Activated CD4-positive, alpha-beta T cell treated with anti-CD3 and anti-CD28 coated beads, Interleukin-2, amount 10 ng/mL, durations not matched to agents 24 days and 14 days (primary cell): ENCODE measurements at regions of chr12 and their contacts with region 1.

Region 1: DNA sequence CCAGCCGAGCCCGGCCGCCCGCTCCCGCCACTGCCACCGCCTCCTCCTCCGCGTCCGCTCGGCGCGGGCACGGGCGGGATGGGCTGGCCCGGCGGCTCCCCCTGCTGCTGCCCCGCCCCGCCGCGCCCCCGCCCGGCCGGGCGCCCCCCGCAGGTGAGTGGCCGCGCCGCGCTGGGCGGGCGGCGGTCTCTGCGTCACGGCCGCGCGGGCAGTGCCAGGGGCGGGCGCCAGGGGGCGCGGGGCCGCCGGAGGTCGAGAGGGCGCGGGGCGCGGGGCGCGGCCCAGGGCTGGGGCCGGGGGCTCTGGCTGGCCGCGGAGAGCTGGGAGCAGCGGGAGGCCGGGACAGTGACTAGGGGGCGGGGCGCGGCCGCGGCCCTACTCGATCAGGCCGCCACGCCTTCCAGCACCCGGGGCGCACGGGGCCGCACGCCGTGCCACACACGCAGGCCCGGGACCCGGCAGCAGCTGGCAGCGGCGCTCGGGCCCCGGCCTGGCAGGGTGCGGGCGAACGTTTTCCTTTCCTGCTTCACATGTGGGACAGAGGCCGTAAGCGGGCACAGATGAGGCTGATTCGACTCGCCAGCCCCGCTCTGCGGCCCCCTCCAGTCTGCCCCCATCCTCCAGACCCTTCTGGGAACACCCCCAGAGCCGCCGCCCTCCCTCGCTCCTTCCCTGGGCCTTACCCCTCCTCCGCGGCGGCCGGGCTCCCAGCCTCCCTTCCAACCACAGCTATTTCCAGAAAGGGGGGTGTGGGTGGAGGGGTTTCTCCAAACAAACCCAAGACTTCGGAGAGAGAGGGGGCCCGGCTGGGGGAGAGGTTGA is 2.4 kb upstream of the TNS2 start:
- DNase-seq: peak; percentile 93
- H3K4me3 Mint-ChIP-seq: peak overlapping the region; percentile 90
- H3K27ac Mint-ChIP-seq: peak overlapping the region; percentile 52
- H3K4me1 Mint-ChIP-seq: peaks cover 29% of the 10 kb centered on the region
- H3K27me3 Mint-ChIP-seq: no peaks in the 10 kb centered on the region

Region 2: DNA sequence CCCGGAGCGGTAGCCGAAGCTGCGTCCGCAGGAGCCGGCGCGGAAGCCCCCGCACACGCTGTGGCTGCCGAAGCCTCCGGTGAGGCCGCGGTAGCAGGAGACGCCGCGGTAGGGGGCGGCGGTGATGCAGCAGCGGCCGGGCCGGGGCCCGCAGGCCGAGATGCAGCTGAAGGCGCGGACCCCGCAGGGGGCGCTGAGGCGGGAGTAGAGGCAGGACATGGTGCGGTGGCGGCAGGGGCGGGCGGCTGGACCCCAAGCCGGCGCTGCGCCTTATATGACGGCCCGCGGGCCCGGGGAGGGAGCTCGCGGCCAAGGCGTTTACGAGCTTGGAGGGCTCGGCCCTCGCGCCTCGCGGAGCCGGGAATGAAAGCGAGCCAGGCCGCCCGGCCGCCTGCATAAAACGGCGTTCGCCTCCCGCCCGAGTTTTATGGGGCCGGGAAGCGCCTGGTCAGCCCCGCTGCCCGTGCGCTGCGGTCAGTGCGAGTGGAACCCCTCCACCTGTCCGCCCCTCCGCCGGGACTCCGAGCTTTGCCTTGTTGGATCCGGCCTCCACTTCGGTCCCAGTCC is 789.0 kb before region 1 on chr12:
- intact Hi-C with region 1: no loop called
- DNase-seq: no peak
- H3K4me3 Mint-ChIP-seq: no peak overlapping the region
- H3K27ac Mint-ChIP-seq: no peak overlapping the region
- H3K4me1 Mint-ChIP-seq: peaks cover 20% of the 10 kb centered on the region
- H3K27me3 Mint-ChIP-seq: peaks cover 54% of the 10 kb centered on the region

Region 3: GRCh38 chr12:52920937-52921826 is 126.2 kb before region 1 on chr12:
- intact Hi-C with region 1: no loop called
- DNase-seq: no peak
- H3K4me3 Mint-ChIP-seq: no peak overlapping the region
- H3K27ac Mint-ChIP-seq: no peak overlapping the region
- H3K4me1 Mint-ChIP-seq: peaks cover 6% of the 10 kb centered on the region
- H3K27me3 Mint-ChIP-seq: peaks cover 5% of the 10 kb centered on the region

Region 4: DNA sequence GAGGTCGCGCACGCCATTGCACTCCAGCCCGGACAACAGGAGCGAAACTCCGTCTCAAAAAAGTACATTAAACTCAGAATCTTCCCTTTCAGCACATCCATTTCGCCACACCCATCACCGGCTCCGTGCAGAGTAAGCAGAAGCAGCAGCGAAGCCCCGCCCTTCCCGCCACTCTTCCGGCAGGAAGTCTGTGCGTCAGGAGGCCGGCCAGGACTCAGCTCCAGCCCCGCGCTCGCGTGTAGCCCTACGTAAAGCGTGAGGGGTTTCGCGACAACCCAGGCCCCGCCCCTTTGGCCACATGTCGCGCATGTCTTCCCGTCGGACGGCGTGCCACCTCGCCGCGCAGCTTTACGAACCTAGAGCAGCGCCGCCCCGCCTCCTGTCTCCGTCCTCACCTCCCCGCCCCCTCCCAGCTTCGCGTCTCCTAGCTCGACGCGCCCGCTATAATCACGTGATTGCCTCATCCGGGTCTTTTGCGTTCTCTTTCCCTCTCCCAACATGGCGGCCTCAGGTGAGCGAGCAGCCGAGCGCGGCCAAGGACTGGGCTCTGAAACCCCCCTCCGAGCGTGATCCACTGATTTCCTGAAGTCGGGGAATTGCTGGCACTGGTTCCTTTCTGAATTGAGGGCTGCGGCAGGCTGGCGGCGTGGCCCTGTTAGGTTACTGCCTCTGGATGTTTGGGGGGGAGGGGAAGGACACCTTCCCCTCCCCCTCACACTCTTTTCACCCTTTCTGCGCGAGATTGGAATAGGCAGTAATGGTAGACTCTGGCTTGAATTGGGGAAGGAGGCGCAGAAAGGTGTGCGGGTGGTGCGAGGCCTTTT is 41.2 kb before region 1 on chr12 and contains the start of gene EIF4B:
- intact Hi-C with region 1: loop called (anchors 2 kb)
- DNase-seq: peak; percentile 100
- H3K4me3 Mint-ChIP-seq: peak within 1 kb of the TSS; percentile 88
- H3K27ac Mint-ChIP-seq: peak within 1 kb of the TSS; percentile 98
- H3K4me1 Mint-ChIP-seq: peaks cover 26% of the 10 kb centered on the region
- H3K27me3 Mint-ChIP-seq: peaks cover 4% of the 10 kb centered on the region
- total RNA-seq, gene EIF4B: 500 and 521 TPM in 2 replicates